HCT116 (cell line): ENCODE measurements at regions of chr14 and their contacts with region 1.

Region 1: GRCh38 chr14:72904840-72905561 is 11.1 kb upstream of the DPF3 start:
- DNase-seq: peak; percentile 44
- ATAC-seq: peak; percentile 63
- H3K4me3 ChIP-seq: no peak overlapping the region
- H3K27ac ChIP-seq: no peak overlapping the region
- H3K4me1 ChIP-seq: peaks cover 3 to 25% of the 10 kb centered on the region in 2 experiments
- H3K27me3 ChIP-seq: no peaks in the 10 kb centered on the region
- CTCF ChIP-seq: peak; percentile 82 to 97 (median 93); a peak in 5 of 6 replicates
- POLR2A ChIP-seq: no peak
- RAD21 ChIP-seq: peak; percentile 96

Region 2: DNA sequence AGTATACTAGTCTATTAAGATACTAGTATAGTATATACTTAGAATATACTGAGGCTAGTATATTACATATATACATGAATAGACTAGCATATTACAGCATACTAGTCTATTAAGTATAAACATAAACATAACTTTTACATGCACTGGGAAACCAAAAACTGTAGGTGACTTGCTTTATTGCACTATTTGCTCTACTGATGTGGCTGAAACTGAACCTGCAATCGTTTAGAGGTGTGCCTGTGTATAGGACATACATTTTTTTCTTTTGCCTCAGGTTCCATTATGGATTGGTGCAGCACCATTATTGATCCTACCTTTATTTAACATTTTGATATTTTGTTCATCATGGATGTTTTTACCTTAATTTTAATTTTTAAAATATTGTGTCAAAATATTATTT is 1116.0 kb before region 1 on chr14:
- CTCF ChIA-PET with region 1: no interaction called
- POLR2A ChIA-PET with region 1: no interaction called
- RAD21 ChIA-PET with region 1: no interaction called
- intact Hi-C with region 1: no loop called
- DNase-seq: no peak
- ATAC-seq: no peak
- H3K4me3 ChIP-seq: no peak overlapping the region
- H3K27ac ChIP-seq: no peak overlapping the region
- H3K4me1 ChIP-seq: no peaks in the 10 kb centered on the region
- H3K27me3 ChIP-seq: no peaks in the 10 kb centered on the region
- CTCF ChIP-seq: no peak
- POLR2A ChIP-seq: no peak
- RAD21 ChIP-seq: no peak

Region 3: DNA sequence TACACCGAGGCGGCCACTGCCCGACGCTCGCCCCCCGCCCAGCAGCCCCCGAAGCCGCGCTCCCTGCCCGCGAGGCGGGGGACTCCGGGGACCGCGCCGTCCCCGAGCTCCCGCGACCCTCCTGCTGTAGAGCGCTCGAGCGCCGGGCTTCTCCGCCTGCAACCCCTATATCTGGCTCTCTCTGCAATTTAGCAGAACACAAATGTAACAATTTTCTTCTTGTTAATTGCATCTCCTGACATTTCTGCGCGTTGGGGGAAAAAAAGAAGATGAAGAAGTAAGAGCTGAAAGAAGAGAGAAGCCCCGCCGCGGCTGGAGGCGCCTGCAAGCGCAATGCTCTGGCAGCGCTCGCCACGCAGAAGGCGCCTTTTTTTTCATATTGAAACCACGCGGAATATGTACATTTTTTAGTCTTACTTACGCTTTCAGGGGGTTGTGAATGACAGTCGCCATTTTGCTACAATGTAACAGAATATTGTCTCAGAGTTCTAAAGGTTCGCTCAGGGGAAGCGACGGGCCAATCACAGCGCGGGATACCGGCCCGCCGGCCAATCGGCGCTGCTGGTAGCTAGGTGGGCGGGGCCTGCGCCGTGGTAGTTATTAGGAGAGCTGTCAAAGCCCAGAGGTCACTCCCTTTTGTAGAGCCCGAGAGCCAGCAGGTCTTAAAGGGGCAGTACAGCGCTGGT is 11.2 kb before region 1 on chr14 and contains the start of gene DPF3:
- CTCF ChIA-PET with region 1: interaction called, 23 read pairs
- POLR2A ChIA-PET with region 1: interaction called, 3 read pairs
- RAD21 ChIA-PET with region 1: no interaction called
- intact Hi-C with region 1: no loop called
- DNase-seq: peak; percentile 91
- ATAC-seq: peak; percentile 96
- H3K4me3 ChIP-seq: peak within 1 kb of the TSS; percentile 73 to 74
- H3K27ac ChIP-seq: 0 out of 2 replicates have a peak within 1 kb of the TSS, but pooled peaks have one; percentile 17
- H3K4me1 ChIP-seq: peaks cover 9 to 23% of the 10 kb centered on the region in 2 experiments; a peak in 2 of 4 replicates
- H3K27me3 ChIP-seq: peaks cover 9% of the 10 kb centered on the region; the same call in 1 of the 2 replicates
- CTCF ChIP-seq: no peak
- POLR2A ChIP-seq: no peak
- RAD21 ChIP-seq: no peak
- total RNA-seq, gene DPF3: 0.27 TPM

Region 4: DNA sequence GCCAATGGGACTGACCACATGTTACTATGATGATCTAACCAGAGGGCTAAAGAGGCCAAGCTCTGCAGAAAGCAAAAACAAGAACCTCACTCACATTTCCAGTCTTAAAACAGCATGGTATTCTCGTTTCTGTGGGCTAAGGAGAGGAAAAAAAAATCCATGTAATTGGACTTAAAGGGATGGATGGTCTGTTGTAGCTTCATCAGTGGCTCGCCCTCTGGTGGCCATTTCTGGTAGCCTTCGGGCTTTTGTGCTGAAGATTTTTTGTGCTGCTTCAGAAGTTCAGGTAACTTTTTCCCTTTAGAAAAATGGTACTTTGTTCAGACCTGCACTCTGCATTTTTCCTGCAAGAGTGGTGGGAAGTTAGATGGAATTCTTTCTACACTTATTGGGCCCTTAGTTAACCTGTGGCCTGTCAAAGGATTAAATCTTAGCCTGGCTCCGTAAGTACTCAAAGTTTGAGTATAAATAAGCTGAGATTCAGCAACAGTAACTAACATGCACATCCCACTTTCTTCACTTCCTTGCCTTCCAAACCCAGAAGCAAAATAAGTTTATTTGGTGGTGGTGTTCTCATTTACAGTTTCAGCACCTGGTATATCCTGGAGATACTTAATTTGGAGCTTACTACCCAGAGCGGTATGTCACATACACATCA is 43.6 kb after region 1 on chr14:
- CTCF ChIA-PET with region 1: interaction called, 5 read pairs
- POLR2A ChIA-PET with region 1: no interaction called
- RAD21 ChIA-PET with region 1: no interaction called
- intact Hi-C with region 1: loop called (anchors 1 kb)
- DNase-seq: peak; percentile 27
- ATAC-seq: peak; percentile 85
- H3K4me3 ChIP-seq: no peak overlapping the region
- H3K27ac ChIP-seq: no peak overlapping the region
- H3K4me1 ChIP-seq: no peaks in the 10 kb centered on the region
- H3K27me3 ChIP-seq: no peaks in the 10 kb centered on the region
- CTCF ChIP-seq: peak; percentile 59 to 89 (median 84); a peak in 5 of 6 replicates
- POLR2A ChIP-seq: no peak
- RAD21 ChIP-seq: peak; percentile 63

Region 5: GRCh38 chr14:73472185-73473114 is 567.4 kb after region 1 on chr14:
- CTCF ChIA-PET with region 1: interaction called, 3 read pairs
- POLR2A ChIA-PET with region 1: no interaction called
- RAD21 ChIA-PET with region 1: no interaction called
- intact Hi-C with region 1: loop called (anchors 10 kb)
- DNase-seq: peak; percentile 60
- ATAC-seq: peak; percentile 89
- H3K4me3 ChIP-seq: no peak overlapping the region
- H3K27ac ChIP-seq: no peak overlapping the region
- H3K4me1 ChIP-seq: no peaks in the 10 kb centered on the region
- H3K27me3 ChIP-seq: no peaks in the 10 kb centered on the region
- CTCF ChIP-seq: peak; percentile 54 to 78 (median 75)
- POLR2A ChIP-seq: no peak
- RAD21 ChIP-seq: peak; percentile 93